CD14-positive monocyte (primary cell): ENCODE measurements at regions of chr14 and their contacts with region 1.

Region 1: DNA sequence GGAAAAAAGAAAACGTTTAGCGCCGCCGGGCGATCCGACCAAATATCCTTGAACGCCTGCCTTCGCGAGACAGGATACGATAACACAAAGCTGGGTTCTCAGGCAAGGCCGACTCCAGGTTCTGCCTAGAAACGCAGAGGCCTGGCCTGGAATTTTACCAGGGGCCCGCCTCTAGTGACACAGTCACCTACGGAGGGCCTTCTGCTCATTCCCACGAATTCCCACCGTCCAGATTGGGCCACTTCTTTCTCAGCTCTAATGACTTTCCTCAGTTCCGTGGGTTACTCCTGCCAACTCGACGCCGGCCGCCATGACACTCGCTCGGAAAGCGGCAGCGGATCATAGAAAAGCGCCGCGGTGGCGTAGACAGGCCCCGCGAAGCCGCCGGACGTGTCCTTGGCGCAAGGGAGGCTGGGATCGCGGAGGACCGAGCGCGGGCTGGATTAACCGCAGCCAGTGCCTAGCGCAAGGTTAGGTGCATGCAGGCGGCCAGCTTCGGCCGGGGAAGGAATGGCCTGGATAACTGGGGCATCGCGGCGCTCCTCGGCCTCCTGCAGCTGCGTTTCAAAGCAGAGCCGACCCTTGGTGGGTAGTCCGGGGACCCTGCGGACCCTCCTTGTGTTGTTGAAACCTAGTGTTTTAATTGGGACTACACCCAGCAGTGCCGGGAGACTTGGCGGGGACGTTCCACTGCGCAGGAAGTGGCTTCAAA is at the start of gene TRIP11:
- DNase-seq: peak; percentile 85 to 87 (median 85)
- H3K4me3 ChIP-seq: peak within 1 kb of the TSS; percentile 86 to 97 (median 87)
- H3K4me3 Mint-ChIP-seq: peak within 1 kb of the TSS; percentile 95 to 96
- H3K27ac ChIP-seq: peak within 1 kb of the TSS; percentile 97 to 99
- H3K27ac Mint-ChIP-seq: peak within 1 kb of the TSS; percentile 92 to 99 (median 99)
- H3K4me1 ChIP-seq: peaks cover 24 to 34% of the 10 kb centered on the region in 2 donors
- H3K4me1 Mint-ChIP-seq: peaks cover 34% of the 10 kb centered on the region
- H3K27me3 ChIP-seq: no peaks in the 10 kb centered on the region
- H3K27me3 Mint-ChIP-seq: no peaks in the 10 kb centered on the region
- CTCF ChIP-seq: no peak
- polyA plus RNA-seq, gene TRIP11: 6.1 to 15.6 (median 13.4) TPM

Region 2: DNA sequence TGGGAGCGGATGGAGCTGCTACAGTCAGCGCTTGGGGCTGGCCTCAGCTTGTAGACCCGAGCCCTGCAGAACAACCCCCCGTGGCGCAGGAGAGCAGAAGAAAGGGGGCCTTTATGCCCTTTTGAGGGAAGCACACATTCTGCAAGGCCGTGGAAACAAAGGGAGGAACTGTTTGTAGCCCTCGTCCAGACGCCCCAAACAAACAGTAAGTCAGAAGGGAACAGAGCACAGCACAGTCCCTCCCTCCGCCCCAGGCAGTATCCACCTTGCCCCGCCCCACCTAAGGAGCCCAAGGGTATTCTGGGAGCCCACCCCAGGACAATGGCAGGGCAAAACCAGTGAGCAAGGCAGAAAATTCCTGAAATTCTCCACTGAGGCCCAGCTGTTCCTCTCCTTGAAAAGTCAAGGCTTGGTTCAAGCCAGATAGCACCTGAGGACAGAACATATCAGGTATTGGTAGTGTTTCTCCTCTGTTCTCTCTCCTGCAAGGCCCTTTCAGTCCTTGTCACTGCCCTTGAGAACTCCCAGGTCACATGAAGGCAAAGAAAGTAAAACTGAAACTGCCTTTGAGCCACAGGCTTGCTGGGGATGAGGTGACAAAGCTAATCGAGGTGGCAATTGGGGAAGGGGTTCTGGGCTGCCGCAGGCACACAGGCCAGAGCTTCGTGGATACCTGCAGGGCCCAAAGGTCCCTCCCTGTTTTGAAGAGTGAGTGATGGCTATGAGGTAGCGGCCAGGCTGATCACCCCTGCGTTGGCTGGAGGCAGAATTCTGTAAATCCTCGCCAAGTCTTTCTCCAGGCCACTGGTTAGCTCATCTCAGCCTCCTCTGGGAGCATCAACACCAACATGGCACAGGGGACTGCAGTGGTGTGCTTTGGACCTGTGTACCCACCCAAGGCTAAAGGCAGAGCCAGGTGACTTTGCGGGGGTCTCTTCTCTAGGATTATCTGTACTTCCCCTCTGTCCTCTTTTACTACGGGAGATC is 925.5 kb before region 1 on chr14:
- intact Hi-C with region 1: no loop called
- DNase-seq: peak; percentile 71 to 84 (median 74)
- H3K4me3 ChIP-seq: peak overlapping the region; percentile 62 to 88 (median 77)
- H3K4me3 Mint-ChIP-seq: peak overlapping the region; percentile 92 to 96
- H3K27ac ChIP-seq: peak overlapping the region; percentile 94 to 98
- H3K27ac Mint-ChIP-seq: peak overlapping the region; percentile 97 to 99 (median 98)
- H3K4me1 ChIP-seq: peaks cover 48 to 57% of the 10 kb centered on the region in 2 donors
- H3K4me1 Mint-ChIP-seq: peaks cover 59% of the 10 kb centered on the region
- H3K27me3 ChIP-seq: no peaks in the 10 kb centered on the region
- H3K27me3 Mint-ChIP-seq: no peaks in the 10 kb centered on the region
- CTCF ChIP-seq: no peak

Region 3: GRCh38 chr14:92004062-92004461 is 35.8 kb before region 1 on chr14:
- intact Hi-C with region 1: no loop called
- DNase-seq: no peak
- H3K4me3 ChIP-seq: no peak overlapping the region
- H3K4me3 Mint-ChIP-seq: no peak overlapping the region
- H3K27ac ChIP-seq: no peak overlapping the region
- H3K27ac Mint-ChIP-seq: no peak overlapping the region
- H3K4me1 ChIP-seq: no peaks in the 10 kb centered on the region
- H3K4me1 Mint-ChIP-seq: peaks cover 3% of the 10 kb centered on the region
- H3K27me3 ChIP-seq: no peaks in the 10 kb centered on the region
- H3K27me3 Mint-ChIP-seq: no peaks in the 10 kb centered on the region
- CTCF ChIP-seq: no peak

Region 4: GRCh38 chr14:92106143-92106926 is 66.5 kb after region 1 on chr14 and contains the start of gene ATXN3:
- intact Hi-C with region 1: loop called (anchors 2 to 5 kb)
- DNase-seq: peak; percentile 98
- H3K4me3 ChIP-seq: peak within 1 kb of the TSS; percentile 75 to 99 (median 96)
- H3K4me3 Mint-ChIP-seq: peak within 1 kb of the TSS; percentile 100
- H3K27ac ChIP-seq: peak within 1 kb of the TSS; percentile 85 to 95
- H3K27ac Mint-ChIP-seq: peak within 1 kb of the TSS; percentile 97 to 100 (median 99)
- H3K4me1 ChIP-seq: peaks cover 15 to 26% of the 10 kb centered on the region in 2 donors
- H3K4me1 Mint-ChIP-seq: peaks cover 32% of the 10 kb centered on the region
- H3K27me3 ChIP-seq: no peaks in the 10 kb centered on the region
- H3K27me3 Mint-ChIP-seq: peaks cover 0 to 3% (median 0%) of the 10 kb centered on the region in 3 donors
- CTCF ChIP-seq: peak; percentile 76
- polyA plus RNA-seq, gene ATXN3: 17.7 to 24.0 (median 18.5) TPM